Gastrocnemius medialis (tissue), 4 donors: ENCODE measurements at regions of chr3 and their contacts with region 1.

Region 1: DNA sequence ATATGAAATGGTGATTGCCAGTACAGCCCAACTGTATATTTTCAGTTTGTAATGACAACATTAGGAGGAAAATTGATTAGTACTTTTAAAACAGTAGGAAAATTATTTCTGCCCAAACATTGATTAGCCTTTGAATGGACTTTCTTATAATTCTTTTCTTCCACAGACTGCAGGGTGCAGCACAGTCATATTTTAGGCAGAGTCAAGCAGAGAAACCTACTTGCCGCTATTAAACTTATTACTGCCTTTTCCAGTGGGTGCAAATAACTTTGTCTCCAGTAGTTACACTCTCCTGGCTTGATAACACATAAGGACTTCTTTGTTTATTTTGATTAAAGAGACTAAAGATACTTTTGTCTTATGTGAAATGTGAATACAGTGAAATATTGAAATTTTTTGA is 85.4 kb downstream of the PPM1L start:
- DNase-seq: no peak
- ATAC-seq: peak; percentile 31 to 53
- H3K4me3 ChIP-seq: no peak overlapping the region
- H3K27ac ChIP-seq: peak overlapping the region in 2 of 4 donors; percentile 70 to 84
- H3K4me1 ChIP-seq: peaks cover 27 to 50% of the 10 kb centered on the region in 2 donors
- H3K27me3 ChIP-seq: no peaks in the 10 kb centered on the region
- CTCF ChIP-seq: no peak
- POLR2A ChIP-seq: no peak

Region 2: DNA sequence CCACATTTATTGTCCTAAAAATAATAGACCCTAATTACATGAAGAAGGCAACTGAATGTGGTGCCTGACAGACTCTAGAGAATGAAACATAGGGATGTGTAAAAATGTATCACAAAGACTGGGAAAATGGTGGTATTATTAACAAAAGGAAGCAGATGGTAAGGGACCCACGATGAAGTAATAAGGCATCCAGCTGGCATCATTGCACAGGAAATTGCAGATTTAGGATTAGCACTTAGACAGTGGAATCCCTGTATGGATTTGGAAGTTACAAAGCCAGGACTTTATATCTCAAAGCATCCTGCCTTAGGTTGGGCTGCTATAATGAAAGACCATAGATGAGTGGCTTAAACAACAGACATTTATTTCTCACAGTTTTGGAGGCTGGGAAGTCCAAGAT is 18.9 kb after region 1 on chr3:
- in situ Hi-C with region 1: no loop called
- intact Hi-C with region 1: loop called (anchors 2 kb)
- DNase-seq: no peak
- ATAC-seq: no peak
- H3K4me3 ChIP-seq: no peak overlapping the region
- H3K27ac ChIP-seq: no peak overlapping the region
- H3K4me1 ChIP-seq: peaks cover 13 to 23% of the 10 kb centered on the region in 2 donors
- H3K27me3 ChIP-seq: no peaks in the 10 kb centered on the region
- CTCF ChIP-seq: no peak
- POLR2A ChIP-seq: no peak

Region 3: DNA sequence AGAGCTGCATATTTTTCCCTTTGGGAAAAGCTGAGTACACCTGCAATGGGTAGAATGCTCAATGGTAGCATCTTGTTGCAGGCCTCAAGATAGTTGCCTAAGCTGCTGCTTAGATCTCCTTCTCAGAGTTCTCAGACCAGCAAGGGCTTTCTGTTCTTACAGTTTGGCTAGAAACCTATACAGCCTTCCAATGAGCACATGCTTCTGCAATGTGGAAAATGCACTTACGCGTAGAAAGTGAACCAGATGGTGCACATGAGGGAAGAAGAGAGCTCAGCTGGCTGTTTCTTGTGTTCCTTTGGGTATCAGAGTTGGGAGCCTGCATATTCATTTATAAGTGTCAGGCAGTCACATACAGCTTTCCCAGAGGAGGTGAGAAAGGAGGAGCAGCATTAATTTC is 127.3 kb after region 1 on chr3:
- in situ Hi-C with region 1: no loop called
- intact Hi-C with region 1: no loop called
- DNase-seq: no peak
- ATAC-seq: peak in 1 of 2 donors; percentile 27
- H3K4me3 ChIP-seq: no peak overlapping the region
- H3K27ac ChIP-seq: no peak overlapping the region
- H3K4me1 ChIP-seq: peaks cover 0 to 11% of the 10 kb centered on the region in 2 donors
- H3K27me3 ChIP-seq: no peaks in the 10 kb centered on the region
- CTCF ChIP-seq: no peak
- POLR2A ChIP-seq: no peak